PC-9 (cell line): ENCODE measurements at regions of chr2 and their contacts with region 1.

Region 1: GRCh38 chr2:128178650-128179460 is 87.9 kb downstream of the UGGT1 start:
- DNase-seq: peak; percentile 44 to 52
- H3K4me3 ChIP-seq: no peak overlapping the region
- H3K27ac ChIP-seq: no peak overlapping the region
- H3K4me1 ChIP-seq: no peaks in the 10 kb centered on the region
- H3K27me3 ChIP-seq: no peaks in the 10 kb centered on the region
- CTCF ChIP-seq: peak; percentile 92

Region 2: GRCh38 chr2:128372621-128373341 is 193.9 kb after region 1 on chr2:
- CTCF ChIA-PET with region 1: no interaction called
- POLR2A ChIA-PET with region 1: interaction called, 10 read pairs
- intact Hi-C with region 1: no loop called
- DNase-seq: no peak
- H3K4me3 ChIP-seq: no peak overlapping the region
- H3K27ac ChIP-seq: no peak overlapping the region
- H3K4me1 ChIP-seq: no peaks in the 10 kb centered on the region
- H3K27me3 ChIP-seq: no peaks in the 10 kb centered on the region
- CTCF ChIP-seq: no peak

Region 3: GRCh38 chr2:128505575-128506526 is 327.0 kb after region 1 on chr2:
- CTCF ChIA-PET with region 1: no interaction called
- POLR2A ChIA-PET with region 1: interaction called, 10 read pairs
- intact Hi-C with region 1: no loop called
- DNase-seq: no peak
- H3K4me3 ChIP-seq: no peak overlapping the region
- H3K27ac ChIP-seq: no peak overlapping the region
- H3K4me1 ChIP-seq: 0 out of 2 replicates have a peak, but pooled peaks cover 5% of the 10 kb centered on the region
- H3K27me3 ChIP-seq: no peaks in the 10 kb centered on the region
- CTCF ChIP-seq: no peak